Breast epithelium (tissue), 4 donors: ENCODE measurements at regions of chr6 and their contacts with region 1.

Region 1: GRCh38 chr6:55286824-55287223 is 40.4 kb upstream of the GFRAL start:
- DNase-seq: no peak
- H3K4me3 ChIP-seq: no peak overlapping the region
- H3K27ac ChIP-seq: no peak overlapping the region
- H3K4me1 ChIP-seq: no peaks in the 10 kb centered on the region
- H3K27me3 ChIP-seq: no peaks in the 10 kb centered on the region
- CTCF ChIP-seq: no peak
- POLR2A ChIP-seq: no peak

Region 2: DNA sequence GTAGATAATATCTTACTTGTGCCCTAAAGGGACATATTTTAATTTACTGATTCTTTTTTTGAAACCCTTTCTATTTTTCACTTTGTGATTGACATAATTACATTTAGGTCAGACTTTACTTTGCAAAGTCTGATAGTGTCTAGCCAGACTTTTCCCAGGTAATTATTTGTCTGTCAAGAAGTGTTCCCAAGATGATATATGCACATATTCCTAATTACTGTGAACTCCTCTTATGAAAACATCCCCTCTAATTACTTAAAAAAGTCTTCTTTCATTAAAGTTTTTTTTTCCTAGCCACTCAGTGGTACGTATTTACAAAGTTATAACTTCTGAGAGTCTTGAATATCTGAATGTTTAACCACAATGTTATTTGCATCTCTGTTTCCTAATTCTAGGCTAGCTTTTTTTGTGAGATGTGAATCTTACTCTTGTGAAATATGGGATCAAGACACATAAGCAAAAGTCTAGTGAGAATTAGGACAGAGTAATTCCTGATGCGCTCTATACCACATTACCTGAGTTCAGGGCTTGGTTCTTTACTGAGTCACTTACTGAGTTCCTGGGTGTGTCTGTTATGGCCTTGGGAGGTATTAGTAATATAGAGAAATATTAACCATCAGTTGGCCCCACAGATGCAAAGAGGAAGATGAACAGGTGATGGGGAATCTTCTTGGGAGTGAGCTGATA is 412.3 kb before region 1 on chr6:
- intact Hi-C with region 1: loop called (anchors 5 kb)
- DNase-seq: no peak
- H3K4me3 ChIP-seq: no peak overlapping the region
- H3K27ac ChIP-seq: no peak overlapping the region
- H3K4me1 ChIP-seq: no peaks in the 10 kb centered on the region
- H3K27me3 ChIP-seq: no peaks in the 10 kb centered on the region
- CTCF ChIP-seq: no peak
- POLR2A ChIP-seq: no peak